ENCODE measurements at regions of chr12 and their contacts with region 1.

Region 1: DNA sequence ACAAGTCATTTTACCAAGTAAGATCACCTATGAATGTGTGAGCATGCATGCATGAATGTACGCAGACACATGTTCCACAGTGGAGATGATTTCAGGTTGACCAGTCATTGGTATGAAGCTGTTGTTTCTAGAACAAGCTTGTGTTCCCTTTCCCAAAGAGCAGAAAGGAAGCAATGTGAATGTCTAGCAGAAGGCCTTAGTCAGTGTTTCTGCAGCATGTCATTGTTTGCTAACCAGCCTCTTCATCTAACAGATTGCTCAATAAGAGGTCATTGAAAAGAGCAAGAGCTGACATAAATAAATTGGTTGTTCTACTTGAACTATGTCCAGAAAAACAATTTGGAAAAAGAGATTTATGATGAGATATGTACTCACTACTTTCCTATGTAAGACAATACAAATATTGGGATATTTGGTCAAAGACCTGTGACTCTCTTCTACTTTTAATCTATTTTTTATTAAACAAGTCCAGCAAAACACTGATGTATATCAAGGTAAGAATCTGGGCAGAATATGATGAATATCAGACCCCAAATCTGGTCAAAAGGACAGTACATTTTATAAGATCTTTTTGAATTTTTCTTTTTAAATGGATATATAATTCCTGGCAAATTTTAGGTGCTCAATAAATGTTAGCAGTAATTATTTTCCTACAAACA is 191.3 kb downstream of the PLCZ1 start:
- DNase-seq: no peak
- H3K4me3 ChIP-seq: no peak overlapping the region
- H3K4me3 Mint-ChIP-seq: no peak overlapping the region
- H3K27ac Mint-ChIP-seq: no peak overlapping the region
- H3K4me1 ChIP-seq: peaks cover 28% of the 10 kb centered on the region
- H3K4me1 Mint-ChIP-seq: peaks cover 15% of the 10 kb centered on the region
- H3K27me3 ChIP-seq: no peaks in the 10 kb centered on the region; the same call in 1 of the 2 replicates
- H3K27me3 Mint-ChIP-seq: peaks cover 28% of the 10 kb centered on the region
- CTCF ChIP-seq: no peak

Region 2: DNA sequence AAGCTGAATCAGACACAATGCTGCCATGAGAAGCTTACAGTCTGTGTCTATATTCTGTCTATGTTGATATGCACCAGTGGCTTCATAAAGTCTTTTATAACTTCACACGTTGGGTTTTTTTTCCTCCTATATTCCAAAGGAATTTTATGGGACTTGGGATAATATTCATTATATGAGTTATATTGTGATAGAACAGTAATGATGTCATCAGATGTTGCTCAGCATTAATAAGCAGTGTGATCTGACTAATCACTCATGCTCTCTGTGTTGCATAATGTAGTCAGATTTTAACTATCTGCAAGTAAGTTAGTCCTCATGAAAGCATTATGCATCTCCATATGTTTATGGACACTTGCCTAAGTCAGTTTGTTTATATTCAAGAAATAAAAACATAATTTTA is 31.6 kb after region 1 on chr12:
- CTCF ChIA-PET with region 1: no interaction called
- POLR2A ChIA-PET with region 1: no interaction called
- intact Hi-C with region 1: no loop called
- DNase-seq: no peak
- H3K4me3 ChIP-seq: no peak overlapping the region
- H3K4me3 Mint-ChIP-seq: no peak overlapping the region
- H3K27ac Mint-ChIP-seq: no peak overlapping the region
- H3K4me1 ChIP-seq: no peaks in the 10 kb centered on the region
- H3K4me1 Mint-ChIP-seq: no peaks in the 10 kb centered on the region
- H3K27me3 ChIP-seq: no peaks in the 10 kb centered on the region
- H3K27me3 Mint-ChIP-seq: no peaks in the 10 kb centered on the region
- CTCF ChIP-seq: no peak

Region 3: DNA sequence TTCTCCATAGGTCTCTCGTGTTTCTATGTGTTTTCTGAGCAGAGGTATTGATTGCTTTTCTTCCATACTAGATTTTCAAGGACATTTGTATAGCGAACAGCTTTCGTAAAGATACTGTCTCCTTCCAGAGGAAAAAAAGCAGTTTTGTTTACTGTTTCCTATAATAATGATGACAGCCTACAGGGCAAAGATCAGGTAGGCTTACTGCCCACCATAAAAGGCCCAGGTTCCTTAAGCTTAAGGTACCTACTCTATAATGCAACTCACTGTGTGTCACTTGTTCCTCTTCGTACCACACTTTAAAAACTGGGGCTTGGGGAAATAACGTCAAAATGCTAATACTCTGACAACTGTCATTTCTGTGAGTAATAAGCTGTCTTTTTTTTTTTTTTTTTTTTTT is 184.6 kb after region 1 on chr12:
- CTCF ChIA-PET with region 1: no interaction called
- POLR2A ChIA-PET with region 1: interaction called, 12 read pairs
- intact Hi-C with region 1: no loop called
- DNase-seq: no peak
- H3K4me3 ChIP-seq: no peak overlapping the region
- H3K4me3 Mint-ChIP-seq: no peak overlapping the region
- H3K27ac Mint-ChIP-seq: no peak overlapping the region
- H3K4me1 ChIP-seq: no peaks in the 10 kb centered on the region
- H3K4me1 Mint-ChIP-seq: peaks cover 7% of the 10 kb centered on the region
- H3K27me3 ChIP-seq: no peaks in the 10 kb centered on the region
- H3K27me3 Mint-ChIP-seq: no peaks in the 10 kb centered on the region
- CTCF ChIP-seq: no peak